Adrenal gland (tissue), 19 donors: ENCODE measurements at regions of chr3 and their contacts with region 1.

Region 1: DNA sequence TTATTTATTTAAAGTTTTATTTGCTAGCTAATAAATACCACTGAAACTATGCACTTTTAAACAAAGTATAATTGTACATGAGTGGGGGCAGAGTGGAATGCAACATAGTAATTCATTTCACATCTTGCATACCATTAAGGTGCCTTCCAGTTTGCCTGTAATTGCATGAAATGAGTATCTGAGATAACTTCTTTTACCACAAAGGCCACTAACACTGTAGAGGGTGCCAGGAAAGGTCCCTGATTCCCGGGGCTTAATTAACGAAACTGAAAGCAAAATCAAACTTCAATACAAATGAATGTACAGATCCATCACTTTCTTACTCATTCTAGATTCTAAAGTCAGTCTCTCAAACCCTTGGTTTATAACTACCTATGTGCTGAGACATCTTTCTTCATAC is 2.1 kb downstream of the CD47 start:
- DNase-seq: no peak
- H3K4me3 ChIP-seq: peak overlapping the region in 1 of 4 donors; percentile 74
- H3K27ac ChIP-seq: no peak overlapping the region
- H3K4me1 ChIP-seq: peaks cover 8 to 28% of the 10 kb centered on the region in 2 donors
- H3K27me3 ChIP-seq: no peaks in the 10 kb centered on the region
- CTCF ChIP-seq: no peak
- POLR2A ChIP-seq: no peak

Region 2: DNA sequence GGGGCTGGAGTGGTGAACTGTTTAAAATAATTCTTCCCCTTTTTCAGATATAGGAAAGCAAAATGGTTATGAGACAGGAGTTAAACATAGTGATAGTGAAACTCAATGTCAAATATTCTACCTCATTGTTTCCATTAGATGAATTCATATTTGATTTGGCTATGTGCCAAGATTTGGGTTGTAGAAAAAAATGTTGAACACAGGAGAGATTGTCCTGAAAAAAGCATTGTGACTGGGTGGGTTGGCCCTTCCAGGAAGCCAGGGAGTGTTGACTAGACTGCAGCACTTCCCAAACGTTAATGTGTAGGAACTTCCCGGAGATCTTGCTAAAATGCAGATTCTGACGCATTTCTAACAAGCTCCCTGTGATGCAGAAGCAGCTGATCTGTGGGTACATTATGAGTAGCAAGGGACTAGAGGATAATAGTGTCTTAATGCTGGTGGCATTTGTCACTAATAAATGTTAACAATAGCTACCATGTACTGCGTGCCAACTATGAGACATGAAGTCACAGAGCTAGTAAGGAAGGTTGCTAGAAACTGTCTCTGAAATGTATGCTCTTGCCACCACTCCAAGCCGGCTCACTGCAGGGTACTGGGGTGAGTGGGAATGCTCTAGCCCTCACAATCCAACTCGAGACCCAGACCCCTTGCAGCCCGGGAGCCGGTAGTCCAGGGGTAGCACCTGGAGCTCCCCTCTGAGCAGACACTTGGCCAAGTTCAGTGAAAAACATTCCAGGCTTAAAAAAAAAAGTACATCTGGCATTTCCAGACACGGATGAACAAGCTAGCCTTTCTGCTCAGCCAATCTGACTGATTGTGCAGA is 118.5 kb before region 1 on chr3:
- intact Hi-C with region 1: loop called in 1 of 2 experiments (anchors 10 kb)
- DNase-seq: peak in 2 of 7 donors; percentile 8 to 15
- H3K4me3 ChIP-seq: no peak overlapping the region
- H3K27ac ChIP-seq: no peak overlapping the region
- H3K4me1 ChIP-seq: no peaks in the 10 kb centered on the region
- H3K27me3 ChIP-seq: no peaks in the 10 kb centered on the region
- CTCF ChIP-seq: no peak
- POLR2A ChIP-seq: no peak

Region 3: DNA sequence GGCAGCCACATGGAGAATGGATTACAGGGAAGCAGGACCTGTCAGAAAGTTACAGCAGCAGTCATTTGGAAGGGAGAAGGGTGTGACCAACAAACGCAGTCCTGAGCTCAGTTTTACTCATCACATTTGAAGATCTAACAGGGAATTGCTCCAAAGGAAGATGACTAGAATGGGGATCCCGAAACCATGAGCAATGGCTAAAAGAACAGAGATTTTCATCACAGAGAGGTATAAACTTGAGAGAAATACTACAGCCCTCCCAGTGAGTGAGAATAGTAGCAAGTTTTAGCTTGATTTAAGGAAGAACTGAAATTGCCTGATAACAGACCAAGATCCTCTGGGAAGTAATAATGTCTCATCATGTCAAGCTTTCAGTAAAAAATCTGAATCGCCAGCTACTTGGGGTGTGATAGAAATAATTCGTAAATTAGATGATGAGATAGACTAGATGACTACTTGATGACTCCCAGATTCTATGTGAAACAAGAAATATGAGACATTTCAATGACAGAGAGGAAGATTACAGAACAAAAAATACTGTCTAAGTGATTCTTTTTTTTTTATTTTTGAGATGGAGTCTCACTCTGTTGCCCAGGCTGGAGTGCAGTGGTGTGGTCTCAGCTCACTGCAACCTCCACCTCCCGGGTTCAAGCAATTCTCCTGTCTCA is 14.8 kb before region 1 on chr3:
- intact Hi-C with region 1: no loop called
- DNase-seq: no peak
- H3K4me3 ChIP-seq: no peak overlapping the region
- H3K27ac ChIP-seq: no peak overlapping the region
- H3K4me1 ChIP-seq: no peaks in the 10 kb centered on the region
- H3K27me3 ChIP-seq: no peaks in the 10 kb centered on the region
- CTCF ChIP-seq: no peak
- POLR2A ChIP-seq: no peak